Aorta (tissue), 5 donors: ENCODE measurements at regions of chr2 and their contacts with region 1.

Region 1: DNA sequence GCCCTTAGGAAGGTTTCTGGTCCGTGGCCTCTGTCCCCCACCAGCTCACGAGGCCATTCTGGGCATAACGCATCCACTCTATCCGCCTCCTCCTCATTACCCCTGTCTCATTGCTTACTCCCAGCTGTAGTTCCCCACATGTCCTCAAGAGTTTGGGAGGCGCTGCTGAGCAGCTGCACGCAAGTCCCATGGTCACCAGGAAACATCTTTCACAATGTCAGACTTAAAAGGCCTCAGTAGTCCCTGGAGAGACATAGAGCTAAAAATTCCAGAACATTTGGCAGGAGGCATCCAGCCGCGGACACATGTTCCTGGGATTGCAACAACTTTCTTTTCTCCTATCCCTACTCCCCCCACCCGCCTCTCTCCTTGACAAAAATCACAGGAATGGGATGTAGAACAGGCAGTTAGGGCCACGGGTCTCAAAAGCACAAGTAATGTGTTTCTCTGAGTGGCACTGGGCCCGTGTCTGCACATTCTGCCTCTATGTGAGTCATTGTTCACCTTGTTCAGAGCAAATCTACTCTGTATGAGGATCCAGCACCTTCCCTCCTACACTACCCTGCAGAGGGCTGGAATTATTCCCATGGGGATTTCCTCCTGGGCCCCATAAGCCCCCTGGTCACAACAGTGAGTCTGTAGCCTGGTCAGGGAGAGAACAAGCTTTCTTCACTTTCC is 8.1 kb downstream of the LBH start:
- DNase-seq: peak; percentile 83 to 88
- ATAC-seq: peak; percentile 87
- H3K4me3 ChIP-seq: no peak overlapping the region
- H3K27ac ChIP-seq: peak overlapping the region; percentile 36 to 79
- H3K4me1 ChIP-seq: peaks cover 9 to 11% of the 10 kb centered on the region in 2 donors
- H3K27me3 ChIP-seq: no peaks in the 10 kb centered on the region

Region 2: DNA sequence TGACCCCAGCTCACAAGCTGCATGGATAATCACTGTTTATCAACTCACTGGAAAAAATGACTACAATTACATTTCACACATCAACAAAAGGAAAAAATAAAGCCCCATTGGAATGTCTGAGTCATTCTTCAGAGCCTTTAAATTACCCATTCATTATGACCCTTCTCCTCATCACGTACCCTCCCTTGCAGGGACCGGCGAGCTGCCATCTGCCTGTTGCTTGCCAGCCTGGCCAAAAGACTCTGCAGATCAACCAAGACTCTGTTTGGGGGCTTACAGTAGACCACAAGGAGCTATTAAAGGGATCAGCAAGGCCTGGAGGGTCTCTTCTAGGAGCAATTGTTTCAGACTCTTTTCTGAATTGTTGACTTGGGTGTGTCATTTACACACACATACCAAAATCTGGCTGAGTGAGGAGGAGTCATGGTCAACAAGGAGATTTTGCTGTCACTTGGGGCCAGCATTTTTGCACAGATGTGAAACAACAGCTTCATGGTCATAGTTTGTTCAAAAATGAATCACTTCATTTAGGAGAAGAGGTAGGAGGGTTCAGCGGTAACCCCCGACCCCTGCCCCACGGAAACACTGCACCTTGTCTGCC is 33.9 kb after region 1 on chr2:
- intact Hi-C with region 1: loop called in 1 of 2 experiments (anchors 5 kb)
- DNase-seq: peak in 1 of 2 donors; percentile 60
- ATAC-seq: no peak
- H3K4me3 ChIP-seq: no peak overlapping the region
- H3K27ac ChIP-seq: peak overlapping the region in 1 of 2 donors; percentile 26
- H3K4me1 ChIP-seq: no peaks in the 10 kb centered on the region
- H3K27me3 ChIP-seq: no peaks in the 10 kb centered on the region

Region 3: DNA sequence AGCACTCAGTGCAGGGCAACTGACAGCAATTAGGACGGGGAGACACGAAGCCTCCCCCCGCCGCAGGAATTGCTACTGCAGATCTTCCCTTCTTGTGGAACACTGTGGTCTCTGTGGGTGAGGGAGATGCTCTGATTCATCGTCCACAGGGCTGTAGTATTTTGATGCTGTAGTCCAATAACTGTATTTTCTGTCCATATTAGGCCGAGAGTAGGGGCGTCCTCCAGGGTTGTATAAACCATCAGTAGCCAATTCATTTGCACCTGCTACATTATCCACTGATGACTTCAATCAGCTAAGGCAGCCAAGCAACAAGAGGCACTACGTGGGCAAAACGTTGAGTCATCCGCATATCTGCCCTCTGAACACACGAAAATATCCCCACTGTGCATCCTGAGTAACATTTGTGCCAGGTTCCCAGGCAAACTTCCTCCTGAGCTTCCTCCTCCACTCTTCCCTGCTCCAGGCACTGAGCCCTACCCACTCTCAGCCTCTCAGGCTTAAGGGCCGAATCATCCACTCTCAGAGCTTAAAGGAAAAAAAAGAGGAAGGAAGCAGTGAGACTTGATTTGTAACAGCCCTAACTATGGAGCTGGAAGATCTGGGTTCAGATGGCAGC is 54.0 kb after region 1 on chr2:
- intact Hi-C with region 1: no loop called
- DNase-seq: no peak
- ATAC-seq: peak; percentile 55
- H3K4me3 ChIP-seq: no peak overlapping the region
- H3K27ac ChIP-seq: no peak overlapping the region
- H3K4me1 ChIP-seq: no peaks in the 10 kb centered on the region
- H3K27me3 ChIP-seq: no peaks in the 10 kb centered on the region

Region 4: DNA sequence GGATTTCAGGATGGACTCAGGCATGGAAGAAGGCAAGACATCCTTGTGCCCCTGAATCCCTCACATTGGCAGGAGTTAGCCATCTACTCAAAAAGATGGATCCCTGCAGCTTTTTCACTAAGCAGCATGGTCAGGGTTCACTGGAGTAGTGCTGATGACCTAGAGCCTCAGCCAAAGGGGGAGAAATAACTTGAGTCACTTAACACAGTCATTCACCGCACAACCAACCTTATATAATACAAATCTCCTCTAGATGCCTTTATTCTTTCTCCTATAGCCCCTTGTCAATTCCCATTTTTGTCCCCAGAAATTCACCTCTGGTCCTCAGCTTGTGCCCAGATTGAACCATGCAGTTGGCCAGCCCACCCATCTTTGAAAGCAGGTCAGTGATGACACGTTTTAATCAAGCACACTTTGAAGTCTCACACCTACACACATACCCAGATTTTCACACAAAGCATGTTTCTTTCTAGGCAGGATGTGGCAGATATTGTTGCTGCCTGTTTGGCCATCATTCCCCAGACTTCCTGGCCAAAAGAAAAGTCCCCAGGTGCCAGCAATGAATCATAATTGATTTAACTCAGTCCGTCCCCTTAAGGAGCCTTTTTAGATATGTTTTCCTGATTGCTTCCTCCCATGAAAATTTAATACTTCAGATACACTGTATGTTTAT is 76.1 kb after region 1 on chr2:
- intact Hi-C with region 1: loop called in 1 of 2 experiments (anchors 5 kb)
- DNase-seq: no peak
- ATAC-seq: no peak
- H3K4me3 ChIP-seq: no peak overlapping the region
- H3K27ac ChIP-seq: no peak overlapping the region
- H3K4me1 ChIP-seq: no peaks in the 10 kb centered on the region
- H3K27me3 ChIP-seq: no peaks in the 10 kb centered on the region

Region 5: GRCh38 chr2:30373881-30374302 is 134.4 kb after region 1 on chr2:
- intact Hi-C with region 1: loop called in 1 of 2 experiments (anchors 5 kb)
- DNase-seq: no peak
- ATAC-seq: no peak
- H3K4me3 ChIP-seq: no peak overlapping the region
- H3K27ac ChIP-seq: peak overlapping the region in 1 of 2 donors; percentile 8
- H3K4me1 ChIP-seq: no peaks in the 10 kb centered on the region
- H3K27me3 ChIP-seq: no peaks in the 10 kb centered on the region

Region 6: GRCh38 chr2:30611583-30611982 is 372.1 kb after region 1 on chr2:
- intact Hi-C with region 1: no loop called
- DNase-seq: no peak
- ATAC-seq: no peak
- H3K4me3 ChIP-seq: no peak overlapping the region
- H3K27ac ChIP-seq: no peak overlapping the region
- H3K4me1 ChIP-seq: no peaks in the 10 kb centered on the region
- H3K27me3 ChIP-seq: no peaks in the 10 kb centered on the region